ENCODE measurements at regions of chr12 and their contacts with region 1.

Region 1: DNA sequence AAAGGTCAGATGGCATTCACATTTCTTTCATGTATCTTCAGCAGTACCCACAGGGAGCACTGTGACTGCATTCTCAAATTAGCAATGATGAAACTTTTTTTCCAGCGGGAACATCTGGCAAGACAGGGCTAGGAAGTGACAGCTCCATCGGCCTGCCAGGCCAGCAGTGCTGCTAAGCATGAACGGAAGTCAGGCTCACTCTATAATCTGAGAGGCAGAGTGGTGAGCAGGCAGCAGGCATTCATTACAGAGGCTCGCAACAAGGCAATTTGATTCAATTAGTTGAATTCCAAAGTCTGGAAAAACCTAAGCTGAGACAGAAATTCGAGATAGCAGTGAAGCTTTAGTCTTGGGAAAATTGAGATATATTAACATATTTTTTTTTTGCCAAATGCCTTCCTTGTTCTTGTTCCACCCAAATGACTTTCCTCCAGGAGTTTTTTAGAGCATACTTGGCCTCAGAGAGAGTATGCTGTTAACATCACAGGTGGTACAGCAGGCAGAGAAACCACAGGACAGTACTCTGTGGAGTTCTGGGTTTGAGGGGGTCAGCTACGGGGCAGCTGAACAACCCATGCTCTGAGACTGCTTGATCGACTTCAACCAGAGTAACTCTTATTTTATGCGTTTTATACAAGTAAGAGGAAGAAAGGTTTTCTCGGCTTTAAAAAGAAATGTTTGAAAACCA is 414.9 kb downstream of the APAF1 start:
- DNase-seq: peak; percentile 28 to 48
- ATAC-seq: peak; percentile 66 to 72
- H3K4me3 ChIP-seq: no peak overlapping the region
- H3K27ac ChIP-seq: peak overlapping the region in 3 of 4 donors; percentile 38 to 41 (median 39)
- H3K4me1 ChIP-seq: peaks cover 4 to 25% of the 10 kb centered on the region in 2 donors
- H3K27me3 ChIP-seq: no peaks in the 10 kb centered on the region
- CTCF ChIP-seq: no peak
- POLR2A ChIP-seq: no peak

Region 2: DNA sequence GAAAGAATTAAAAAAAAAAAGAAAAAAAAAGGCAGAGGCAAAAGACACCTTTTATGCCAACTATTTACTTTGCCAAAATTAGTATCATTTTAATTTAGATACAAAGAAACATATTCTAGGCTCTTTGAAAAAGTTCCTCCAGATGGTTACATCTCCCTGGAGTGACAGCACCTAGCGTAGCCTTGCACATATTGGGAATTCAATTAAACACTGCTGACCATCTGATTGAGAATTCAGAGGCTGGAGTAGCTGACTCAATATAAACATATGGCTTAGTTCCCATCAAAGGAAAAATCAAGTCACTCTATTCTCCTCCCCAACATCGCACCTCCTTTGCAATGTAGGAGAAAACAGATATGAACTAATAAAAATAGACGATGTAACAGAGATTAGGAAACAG is 888.4 kb after region 1 on chr12:
- in situ Hi-C with region 1: no loop called
- intact Hi-C with region 1: loop called (anchors 5 kb)
- DNase-seq: no peak
- ATAC-seq: no peak
- H3K4me3 ChIP-seq: no peak overlapping the region
- H3K27ac ChIP-seq: no peak overlapping the region
- H3K4me1 ChIP-seq: no peaks in the 10 kb centered on the region
- H3K27me3 ChIP-seq: no peaks in the 10 kb centered on the region
- CTCF ChIP-seq: no peak
- POLR2A ChIP-seq: no peak

Measured in gastrocnemius medialis (tissue), 4 donors.